ENCODE measurements at regions of chr16 and their contacts with region 1.

Region 1: DNA sequence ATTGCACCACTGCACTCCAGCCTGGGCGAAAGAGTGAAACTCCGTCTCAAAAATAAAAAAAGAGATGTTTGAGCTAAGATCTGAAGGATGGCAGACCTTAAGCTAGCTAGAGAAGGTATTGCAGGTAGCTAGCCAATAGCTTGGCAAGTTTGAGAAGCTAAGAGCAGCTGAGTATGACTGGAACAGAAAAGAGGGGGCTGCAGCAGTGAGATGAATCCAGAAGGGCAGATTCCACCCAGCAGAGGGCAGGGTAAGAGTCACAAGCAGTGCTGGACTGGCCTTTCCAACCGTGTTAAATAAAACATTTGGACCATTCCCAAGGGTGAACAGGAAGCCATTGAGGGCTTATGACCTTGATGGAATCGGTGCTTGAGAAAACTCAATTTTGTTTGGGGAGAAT is 5.7 kb upstream of the PHAF1 start:
- DNase-seq: peak in 1 of 2 experiments; percentile 54
- ATAC-seq: peak; percentile 75 to 87; a peak in 5 of 6 replicates
- H3K4me3 ChIP-seq: no peak overlapping the region
- H3K27ac ChIP-seq: no peak overlapping the region
- H3K4me1 ChIP-seq: 0 out of 3 replicates have a peak, but pooled peaks cover 2% of the 10 kb centered on the region
- CTCF ChIP-seq: peak; percentile 40
- EP300 ChIP-seq: no peak
- POLR2A ChIP-seq: no peak
- RAD21 ChIP-seq: peak in 1 of 2 experiments; percentile 21; a peak in 1 of 5 replicates

Region 2: GRCh38 chr16:66954097-66954659 is 149.9 kb before region 1 on chr16:
- CTCF ChIA-PET with region 1: interaction called, 67 read pairs
- POLR2A ChIA-PET with region 1: no interaction called
- DNase-seq: peak; percentile 81 to 90
- ATAC-seq: peak; percentile 93 to 96
- H3K4me3 ChIP-seq: no peak overlapping the region
- H3K27ac ChIP-seq: peak overlapping the region; percentile 26 to 38; a peak in 3 of 6 replicates
- H3K4me1 ChIP-seq: peaks cover 8% of the 10 kb centered on the region; the same call in 2 of the 3 replicates
- CTCF ChIP-seq: peak; percentile 89
- EP300 ChIP-seq: no peak
- POLR2A ChIP-seq: no peak
- RAD21 ChIP-seq: peak; percentile 89 to 90

Region 3: DNA sequence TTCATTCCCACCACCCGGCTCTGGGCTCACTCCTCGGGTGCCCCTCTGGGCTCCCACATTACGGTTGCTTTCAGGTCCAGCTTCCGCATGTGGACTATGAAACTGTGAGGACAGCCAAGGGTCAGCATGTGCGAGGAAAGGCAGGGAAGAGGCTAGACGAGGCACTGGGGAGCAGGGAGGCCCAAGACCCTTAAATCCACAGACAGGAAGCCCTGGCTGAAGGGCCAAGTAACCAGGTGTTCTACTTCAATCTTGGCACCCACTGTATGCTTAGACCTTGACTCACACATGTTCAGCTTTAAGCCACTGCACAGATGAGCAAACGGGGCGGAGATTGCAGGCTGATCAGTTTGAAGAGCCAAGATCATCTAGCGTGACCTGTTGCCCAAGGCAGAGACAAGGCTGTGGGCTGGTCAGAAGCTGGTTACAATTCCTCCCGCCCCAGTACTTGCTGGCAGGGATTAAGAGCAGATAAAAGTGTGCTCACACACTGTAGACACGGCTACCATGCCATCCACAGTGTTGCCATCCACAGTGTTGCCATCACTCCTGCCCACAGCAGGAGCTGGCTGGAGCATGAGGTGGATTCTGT is 115.8 kb before region 1 on chr16 and contains the start of gene CES4A:
- CTCF ChIA-PET with region 1: interaction called, 15 read pairs
- POLR2A ChIA-PET with region 1: no interaction called
- DNase-seq: no peak
- ATAC-seq: peak; percentile 57 to 60; a peak in 5 of 6 replicates
- H3K4me3 ChIP-seq: no peak within 1 kb of the TSS
- H3K27ac ChIP-seq: peak within 1 kb of the TSS; percentile 38 to 44; a peak in 2 of 6 replicates
- H3K4me1 ChIP-seq: peaks cover 4% of the 10 kb centered on the region; the same call in 1 of the 3 replicates
- CTCF ChIP-seq: no peak
- EP300 ChIP-seq: no peak
- POLR2A ChIP-seq: no peak
- RAD21 ChIP-seq: no peak
- polyA plus RNA-seq, gene CES4A: 3.5 and 4.4 TPM in 2 replicates

Region 4: GRCh38 chr16:67043420-67043819 is 60.6 kb before region 1 on chr16:
- CTCF ChIA-PET with region 1: interaction called, 10 read pairs
- POLR2A ChIA-PET with region 1: no interaction called
- DNase-seq: no peak
- ATAC-seq: no peak
- H3K4me3 ChIP-seq: no peak overlapping the region
- H3K27ac ChIP-seq: no peak overlapping the region
- H3K4me1 ChIP-seq: no peaks in the 10 kb centered on the region
- CTCF ChIP-seq: no peak
- EP300 ChIP-seq: no peak
- POLR2A ChIP-seq: no peak
- RAD21 ChIP-seq: no peak

Region 5: DNA sequence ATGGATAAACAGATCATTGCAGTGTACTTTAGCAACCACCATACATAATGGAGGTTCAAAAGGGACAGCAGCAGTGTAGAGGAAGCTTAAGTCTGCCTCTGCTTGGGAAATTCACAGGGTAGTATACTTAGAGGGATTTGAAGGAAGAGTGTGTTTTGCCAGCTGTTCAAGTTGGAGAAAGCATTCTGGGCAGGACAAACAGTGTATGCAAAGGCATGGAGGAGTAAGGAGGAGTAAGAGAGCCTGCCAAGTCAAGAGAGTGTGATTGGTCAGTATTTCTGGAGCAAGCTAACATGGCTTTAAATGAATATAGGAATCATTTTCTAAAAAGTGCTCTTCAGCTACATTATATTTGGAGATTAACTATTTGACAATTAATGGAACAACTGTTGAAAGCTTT is 17.2 kb before region 1 on chr16:
- CTCF ChIA-PET with region 1: interaction called, 20 read pairs
- POLR2A ChIA-PET with region 1: interaction called, 4 read pairs
- DNase-seq: no peak
- ATAC-seq: no peak; a peak in 1 of 6 replicates
- H3K4me3 ChIP-seq: no peak overlapping the region
- H3K27ac ChIP-seq: no peak overlapping the region
- H3K4me1 ChIP-seq: no peaks in the 10 kb centered on the region
- CTCF ChIP-seq: no peak
- EP300 ChIP-seq: no peak
- POLR2A ChIP-seq: no peak
- RAD21 ChIP-seq: no peak

Region 6: DNA sequence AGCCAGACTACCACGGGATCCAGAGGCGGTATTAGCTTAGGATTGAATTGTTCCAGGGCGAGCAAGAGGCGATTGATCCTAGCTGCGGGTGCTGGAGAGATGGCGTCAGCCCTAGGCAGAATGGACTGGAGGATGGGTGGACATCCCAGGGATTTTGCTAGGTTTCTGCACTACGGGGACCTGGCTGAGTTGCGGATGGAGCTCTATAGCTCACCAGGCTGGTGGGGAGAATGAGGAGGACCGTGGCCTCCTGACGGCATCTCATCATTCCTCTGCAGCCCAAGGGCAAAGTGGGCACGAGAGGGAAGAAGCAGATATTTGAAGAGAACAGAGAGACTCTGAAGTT is 123.5 kb after region 1 on chr16:
- CTCF ChIA-PET with region 1: no interaction called
- POLR2A ChIA-PET with region 1: no interaction called
- DNase-seq: no peak
- ATAC-seq: no peak
- H3K4me3 ChIP-seq: peak overlapping the region; percentile 83
- H3K27ac ChIP-seq: peak overlapping the region; percentile 89 to 95
- H3K4me1 ChIP-seq: peaks cover 13% of the 10 kb centered on the region
- CTCF ChIP-seq: no peak
- EP300 ChIP-seq: no peak
- POLR2A ChIP-seq: no peak
- RAD21 ChIP-seq: no peak